Breast epithelium (tissue), 4 donors: ENCODE measurements at regions of chr15 and their contacts with region 1.

Region 1: GRCh38 chr15:28004143-28005003 is 94.7 kb downstream of the OCA2 start:
- DNase-seq: no peak
- H3K4me3 ChIP-seq: no peak overlapping the region
- H3K27ac ChIP-seq: no peak overlapping the region
- H3K4me1 ChIP-seq: no peaks in the 10 kb centered on the region
- H3K27me3 ChIP-seq: no peaks in the 10 kb centered on the region
- CTCF ChIP-seq: no peak
- POLR2A ChIP-seq: no peak

Region 2: DNA sequence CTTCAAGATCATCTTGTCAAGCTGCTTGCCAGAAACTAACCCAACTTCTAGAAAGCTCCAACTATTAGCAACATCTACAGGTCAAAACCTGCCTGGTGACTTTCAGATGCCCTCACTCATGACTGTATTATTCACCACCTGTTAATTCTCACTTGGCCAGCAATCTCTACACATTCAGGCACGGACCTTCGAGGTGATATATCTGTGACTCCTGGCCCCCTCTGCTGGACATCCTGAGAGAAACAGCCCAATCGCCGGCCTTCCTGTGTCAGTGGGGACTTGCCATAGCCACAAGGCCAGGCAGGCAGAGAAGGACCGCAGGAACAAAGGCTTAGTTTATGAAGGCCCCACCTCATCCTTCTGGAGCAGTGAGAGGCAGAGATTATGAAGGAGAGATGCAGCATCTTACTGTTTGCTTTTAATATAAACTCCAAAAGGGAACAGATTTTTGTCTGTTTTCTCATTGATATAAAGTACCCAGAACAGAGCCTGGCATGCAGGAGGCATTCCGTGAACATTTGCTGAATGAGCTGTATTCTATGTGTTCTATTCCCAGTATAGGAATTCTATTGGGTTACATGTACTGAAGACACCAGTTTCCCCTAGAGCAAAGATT is 119.1 kb after region 1 on chr15:
- intact Hi-C with region 1: no loop called
- DNase-seq: peak; percentile 72 to 84
- H3K4me3 ChIP-seq: no peak overlapping the region
- H3K27ac ChIP-seq: peak overlapping the region in 1 of 2 donors; percentile 29
- H3K4me1 ChIP-seq: no peaks in the 10 kb centered on the region
- H3K27me3 ChIP-seq: no peaks in the 10 kb centered on the region
- CTCF ChIP-seq: peak in 2 of 3 donors; percentile 65 to 68
- POLR2A ChIP-seq: no peak

Region 3: GRCh38 chr15:29149738-29150075 is 1145.3 kb after region 1 on chr15:
- intact Hi-C with region 1: loop called (anchors 5 kb)
- DNase-seq: no peak
- H3K4me3 ChIP-seq: no peak overlapping the region
- H3K27ac ChIP-seq: no peak overlapping the region
- H3K4me1 ChIP-seq: no peaks in the 10 kb centered on the region
- H3K27me3 ChIP-seq: no peaks in the 10 kb centered on the region
- CTCF ChIP-seq: no peak
- POLR2A ChIP-seq: no peak

Region 4: GRCh38 chr15:29480278-29480677 is 1475.9 kb after region 1 on chr15:
- intact Hi-C with region 1: loop called (anchors 5 kb)
- DNase-seq: no peak
- H3K4me3 ChIP-seq: no peak overlapping the region
- H3K27ac ChIP-seq: no peak overlapping the region
- H3K4me1 ChIP-seq: no peaks in the 10 kb centered on the region
- H3K27me3 ChIP-seq: no peaks in the 10 kb centered on the region
- CTCF ChIP-seq: no peak
- POLR2A ChIP-seq: no peak